Heart left ventricle (tissue), 16 donors: ENCODE measurements at regions of chr15 and their contacts with region 1.

Region 1: GRCh38 chr15:88375234-88375927 is 91.8 kb downstream of the MRPL46 start:
- DNase-seq: no peak
- ATAC-seq: peak in 1 of 4 donors; percentile 45
- H3K4me3 ChIP-seq: no peak overlapping the region
- H3K27ac ChIP-seq: peak overlapping the region in 6 of 12 donors; percentile 9 to 60 (median 44)
- H3K4me1 ChIP-seq: no peaks in the 10 kb centered on the region
- H3K27me3 ChIP-seq: no peaks in the 10 kb centered on the region
- CTCF ChIP-seq: no peak
- POLR2A ChIP-seq: no peak

Region 2: DNA sequence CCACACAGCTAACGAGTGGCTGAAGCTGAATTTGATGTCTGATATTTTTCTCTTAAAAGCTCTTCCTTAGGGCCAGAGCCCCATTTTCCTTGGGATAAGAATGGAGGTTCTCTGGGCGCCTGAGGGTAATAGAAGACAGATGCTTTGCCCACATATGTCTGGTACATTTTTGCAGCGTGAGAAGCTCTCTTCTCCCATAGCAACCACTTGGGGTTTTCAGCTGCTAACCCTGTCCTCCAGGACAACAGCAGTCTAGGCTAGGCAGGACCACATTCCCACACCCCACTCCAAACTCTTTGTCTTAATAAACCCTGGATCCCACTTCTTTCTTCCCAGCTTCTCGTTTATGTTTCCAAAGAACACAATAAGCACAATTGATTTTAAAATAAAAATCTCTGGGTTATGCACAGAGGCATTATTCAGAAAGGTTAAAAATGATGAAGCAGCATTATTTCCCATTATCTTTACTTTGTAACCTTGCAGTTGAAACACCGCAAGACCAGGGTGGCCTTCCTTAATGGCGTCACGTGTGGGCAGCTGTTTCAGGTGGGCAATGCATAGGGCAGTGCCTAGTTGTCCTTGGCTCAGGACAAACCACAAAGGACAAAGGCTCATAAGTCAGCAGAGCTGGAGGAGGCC is 62.3 kb before region 1 on chr15:
- intact Hi-C with region 1: loop called in 1 of 10 experiments (anchors 10 kb)
- DNase-seq: no peak
- ATAC-seq: no peak
- H3K4me3 ChIP-seq: no peak overlapping the region
- H3K27ac ChIP-seq: no peak overlapping the region
- H3K4me1 ChIP-seq: no peaks in the 10 kb centered on the region
- H3K27me3 ChIP-seq: peaks cover 0 to 3% (median 0%) of the 10 kb centered on the region in 9 donors
- CTCF ChIP-seq: no peak
- POLR2A ChIP-seq: no peak

Region 3: DNA sequence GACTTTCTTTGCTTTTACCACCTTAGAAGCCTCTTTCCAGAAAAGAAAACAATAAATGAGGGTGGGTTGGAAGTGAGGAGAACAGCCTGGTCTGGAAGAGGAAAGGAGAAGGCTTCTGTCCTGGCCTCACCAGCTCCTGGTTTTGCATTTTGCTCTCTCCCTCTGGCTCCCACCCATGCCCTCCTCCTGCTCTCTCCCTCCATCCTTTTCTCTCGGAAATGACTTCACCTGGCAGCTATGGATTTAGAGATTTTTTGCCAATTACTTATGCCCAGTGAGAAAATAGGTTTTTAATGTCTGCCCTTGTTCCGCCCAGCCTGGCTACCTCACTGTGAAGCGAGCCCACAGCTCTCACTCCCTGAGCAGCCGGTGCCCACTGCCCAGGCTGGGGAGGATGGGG is 40.9 kb before region 1 on chr15:
- intact Hi-C with region 1: no loop called
- DNase-seq: no peak
- ATAC-seq: no peak
- H3K4me3 ChIP-seq: no peak overlapping the region
- H3K27ac ChIP-seq: no peak overlapping the region
- H3K4me1 ChIP-seq: no peaks in the 10 kb centered on the region
- H3K27me3 ChIP-seq: no peaks in the 10 kb centered on the region
- CTCF ChIP-seq: no peak
- POLR2A ChIP-seq: no peak

Region 4: GRCh38 chr15:88635318-88635717 is 259.9 kb after region 1 on chr15:
- intact Hi-C with region 1: no loop called
- DNase-seq: no peak
- ATAC-seq: no peak
- H3K4me3 ChIP-seq: peak overlapping the region in 1 of 12 donors; percentile 18
- H3K27ac ChIP-seq: peak overlapping the region in 2 of 12 donors; percentile 19 to 96
- H3K4me1 ChIP-seq: peaks cover 0 to 58% (median 18%) of the 10 kb centered on the region in 12 donors
- H3K27me3 ChIP-seq: no peaks in the 10 kb centered on the region
- CTCF ChIP-seq: no peak
- POLR2A ChIP-seq: no peak